ENCODE measurements at regions of chrX and their contacts with region 1.

Region 1: DNA sequence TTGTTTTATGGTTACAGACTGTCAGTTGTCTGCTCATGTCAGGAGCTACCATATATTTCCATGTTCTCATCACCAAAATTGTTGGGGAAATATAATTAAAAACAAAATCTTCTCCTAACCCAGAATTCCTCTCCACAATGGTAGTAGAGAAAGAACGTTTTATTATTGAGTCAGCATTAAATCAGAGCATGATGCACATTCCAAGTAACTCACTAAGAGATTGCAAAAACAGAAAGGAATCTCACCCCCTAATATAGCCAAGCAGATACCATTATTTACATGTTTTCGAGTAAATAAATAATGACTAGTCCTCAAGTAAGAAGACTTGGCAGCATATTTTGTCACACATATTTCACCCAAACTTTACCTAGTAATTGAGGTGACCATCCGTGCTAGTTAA is 36.2 kb upstream of the ARHGEF6 start:
- DNase-seq: no peak
- H3K4me3 ChIP-seq: no peak overlapping the region
- H3K27ac ChIP-seq: no peak overlapping the region
- H3K4me1 ChIP-seq: no peaks in the 10 kb centered on the region
- H3K27me3 ChIP-seq: no peaks in the 10 kb centered on the region
- CTCF ChIP-seq: no peak
- POLR2A ChIP-seq: no peak

Region 2: GRCh38 chrX:136767104-136767941 is 49.6 kb before region 1 on chrX:
- intact Hi-C with region 1: loop called (anchors 5 kb)
- DNase-seq: peak; percentile 47 to 59
- H3K4me3 ChIP-seq: peak overlapping the region in 2 of 3 donors; percentile 16 to 35
- H3K27ac ChIP-seq: peak overlapping the region; percentile 32 to 77 (median 68)
- H3K4me1 ChIP-seq: no peaks in the 10 kb centered on the region
- H3K27me3 ChIP-seq: no peaks in the 10 kb centered on the region
- CTCF ChIP-seq: no peak
- POLR2A ChIP-seq: peak in 1 of 2 donors; percentile 8

Region 3: GRCh38 chrX:136920001-136920400 is 103.0 kb after region 1 on chrX:
- intact Hi-C with region 1: no loop called
- DNase-seq: no peak
- H3K4me3 ChIP-seq: no peak overlapping the region
- H3K27ac ChIP-seq: no peak overlapping the region
- H3K4me1 ChIP-seq: no peaks in the 10 kb centered on the region
- H3K27me3 ChIP-seq: no peaks in the 10 kb centered on the region
- CTCF ChIP-seq: no peak
- POLR2A ChIP-seq: no peak